ENCODE measurements at regions of chr9 and their contacts with region 1.

Region 1: DNA sequence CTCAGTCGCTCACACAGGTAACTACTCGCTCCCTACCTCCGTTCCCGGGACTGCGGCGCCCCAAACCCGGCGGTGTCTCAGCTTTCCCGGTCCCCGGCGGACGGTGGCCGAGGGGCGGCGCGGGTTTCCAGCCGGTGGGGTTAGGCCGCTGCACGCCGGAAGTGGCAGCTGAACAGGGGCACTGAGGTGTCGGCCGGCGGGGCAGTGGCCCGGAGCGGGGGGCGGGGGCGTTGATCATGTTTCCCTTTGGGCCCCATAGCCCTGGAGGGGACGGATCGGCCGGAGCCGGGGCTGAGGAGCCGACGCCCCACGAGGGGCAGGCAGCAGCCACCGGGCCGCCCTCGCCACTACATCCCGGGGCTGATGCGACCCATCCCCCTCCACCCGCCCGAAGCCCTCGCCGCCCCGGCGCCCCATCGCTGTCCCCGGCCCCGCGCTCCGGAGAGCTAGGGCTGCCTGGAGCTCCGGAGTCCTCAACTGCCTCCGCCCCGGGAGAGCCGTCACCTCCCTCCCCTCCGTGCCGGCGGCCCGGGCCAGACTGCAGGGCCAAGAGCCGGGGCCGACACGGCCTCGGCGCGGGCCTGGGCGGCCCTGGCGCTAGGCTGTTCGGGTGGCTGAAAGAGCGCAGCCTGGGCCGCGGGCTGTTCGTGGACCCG is at the start of gene DCAF10:
- DNase-seq: no peak
- H3K4me3 ChIP-seq: peak within 1 kb of the TSS; percentile 55
- H3K27me3 ChIP-seq: no peaks in the 10 kb centered on the region
- CTCF ChIP-seq: no peak
- polyA plus RNA-seq, gene DCAF10: 22.0 and 25.2 TPM in 2 replicates

Region 2: DNA sequence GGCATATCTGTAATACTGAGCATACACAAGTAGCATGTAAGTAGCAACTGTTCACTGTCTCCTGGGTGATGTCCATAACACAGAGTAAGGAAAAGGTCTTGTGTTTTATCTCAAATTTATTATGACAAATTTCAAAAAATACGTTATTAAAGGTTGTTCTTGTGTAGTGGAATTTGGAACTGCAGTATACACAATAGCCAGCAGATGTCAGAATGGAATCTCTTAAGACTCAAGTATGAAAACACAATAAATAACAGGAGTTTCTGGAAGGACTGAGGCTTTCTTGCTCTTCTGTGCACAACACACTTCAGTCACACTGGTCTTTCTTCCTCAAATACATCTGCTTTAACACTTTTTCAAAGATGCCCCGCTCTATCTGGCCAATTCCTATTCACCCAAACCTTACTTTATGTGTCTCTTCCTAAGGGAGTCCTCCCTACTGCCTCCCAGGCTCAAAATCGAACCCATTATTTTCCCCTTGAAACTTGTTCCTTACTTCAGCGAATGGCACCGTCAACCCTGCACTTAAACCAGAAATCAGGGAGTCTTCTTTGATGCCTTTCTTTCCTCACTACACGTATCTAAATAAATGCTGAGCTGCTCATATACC is 218.1 kb before region 1 on chr9:
- CTCF ChIA-PET with region 1: no interaction called
- POLR2A ChIA-PET with region 1: no interaction called
- DNase-seq: no peak
- H3K4me3 ChIP-seq: no peak overlapping the region
- H3K27me3 ChIP-seq: no peaks in the 10 kb centered on the region
- CTCF ChIP-seq: peak; percentile 67

Region 3: GRCh38 chr9:37784616-37785483 is 15.9 kb before region 1 on chr9 and contains the start of gene EXOSC3:
- CTCF ChIA-PET with region 1: interaction called, 3 read pairs
- POLR2A ChIA-PET with region 1: interaction called, 17 read pairs
- DNase-seq: peak; percentile 38
- H3K4me3 ChIP-seq: peak within 1 kb of the TSS; percentile 82
- H3K27me3 ChIP-seq: no peaks in the 10 kb centered on the region
- CTCF ChIP-seq: no peak
- polyA plus RNA-seq, gene EXOSC3: 14.2 and 21.8 TPM in 2 replicates

Region 4: GRCh38 chr9:37970301-37971106 is 169.7 kb after region 1 on chr9:
- CTCF ChIA-PET with region 1: no interaction called
- POLR2A ChIA-PET with region 1: interaction called, 12 read pairs
- DNase-seq: no peak
- H3K4me3 ChIP-seq: no peak overlapping the region
- H3K27me3 ChIP-seq: no peaks in the 10 kb centered on the region
- CTCF ChIP-seq: no peak